Posterior cingulate gyrus (tissue), 11 donors: ENCODE measurements at regions of chr2 and their contacts with region 1.

Region 1: GRCh38 chr2:10408649-10409579 is 39.2 kb downstream of the ODC1 start:
- DNase-seq: peak; percentile 47 to 96 (median 75)

Region 2: GRCh38 chr2:10269711-10270610 is 139.0 kb before region 1 on chr2:
- intact Hi-C with region 1: loop called (anchors 1 kb)
- DNase-seq: peak in 3 of 10 donors; percentile 6 to 75 (median 35)

Region 3: GRCh38 chr2:10285556-10286198 is 123.2 kb before region 1 on chr2:
- intact Hi-C with region 1: loop called (anchors 5 kb)
- DNase-seq: peak; percentile 75 to 98 (median 88)